Posterior vena cava (tissue), 2 donors: ENCODE measurements at regions of chr7 and their contacts with region 1.

Region 1: GRCh38 chr7:51658684-51659083 is 342.1 kb upstream of the COBL start:
- DNase-seq: no peak

Region 2: DNA sequence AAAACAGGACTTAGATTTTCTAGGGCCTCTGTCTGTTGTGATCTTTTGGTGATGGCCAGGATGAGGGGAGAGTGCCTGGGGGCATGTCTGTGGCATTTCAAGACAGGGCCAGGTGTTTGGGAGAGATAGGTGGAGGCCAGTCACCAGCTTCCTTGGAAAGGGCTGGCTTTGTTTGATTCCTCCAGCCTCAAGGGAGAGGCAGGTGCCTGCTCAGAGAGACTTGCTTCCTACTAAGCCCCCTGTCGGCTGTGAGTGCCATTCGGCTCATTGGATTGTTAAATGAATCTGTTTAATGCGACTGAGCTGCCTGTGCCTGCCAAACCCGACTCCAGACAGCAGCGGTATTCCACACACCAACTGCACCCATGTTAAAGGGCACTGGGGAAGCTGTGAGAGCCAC is 38.0 kb before region 1 on chr7:
- intact Hi-C with region 1: no loop called
- DNase-seq: no peak

Region 3: DNA sequence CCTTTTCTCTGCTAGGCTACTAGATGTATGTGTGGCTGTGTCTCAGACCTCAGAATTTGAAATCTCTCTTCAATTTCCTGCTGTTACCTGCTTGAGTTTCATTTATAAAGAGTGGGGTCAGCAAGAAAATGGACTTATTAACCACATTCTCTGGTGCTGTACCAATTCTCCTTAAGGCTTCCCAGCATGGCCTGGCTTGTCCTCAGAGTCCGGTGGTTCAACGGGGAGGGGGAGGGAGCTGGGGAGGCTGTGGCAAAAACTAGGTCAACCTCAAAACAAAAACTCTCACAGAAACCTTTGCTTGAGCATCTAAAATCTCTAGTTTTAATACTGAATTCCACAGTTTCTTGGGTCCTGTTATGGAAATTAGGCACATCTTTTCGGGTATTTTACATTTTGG is 47.0 kb after region 1 on chr7:
- intact Hi-C with region 1: no loop called
- DNase-seq: no peak

Region 4: DNA sequence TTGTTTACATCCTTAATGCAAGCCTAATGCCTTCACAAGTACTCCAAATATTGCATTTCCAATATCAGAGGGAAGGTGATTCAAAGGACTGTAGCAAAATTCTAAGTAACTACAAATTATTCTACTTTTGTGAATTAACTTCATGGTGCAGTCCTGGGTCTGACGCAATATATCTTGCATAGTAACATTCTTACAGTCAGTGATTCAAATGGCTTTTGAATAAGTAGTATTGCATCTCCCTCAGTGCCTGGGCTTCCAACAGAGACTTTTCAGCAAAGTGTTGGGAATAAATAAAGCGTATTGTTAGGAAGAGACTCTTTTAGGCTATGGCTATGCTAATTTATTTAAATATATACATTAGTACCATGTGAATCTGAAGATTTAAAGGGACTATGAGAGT is 222.6 kb after region 1 on chr7:
- intact Hi-C with region 1: loop called in 1 of 2 experiments (anchors 5 kb)
- DNase-seq: no peak